Cardiac septum (tissue), 1 donor: ENCODE measurements at regions of chr6 and their contacts with region 1.

Region 1: DNA sequence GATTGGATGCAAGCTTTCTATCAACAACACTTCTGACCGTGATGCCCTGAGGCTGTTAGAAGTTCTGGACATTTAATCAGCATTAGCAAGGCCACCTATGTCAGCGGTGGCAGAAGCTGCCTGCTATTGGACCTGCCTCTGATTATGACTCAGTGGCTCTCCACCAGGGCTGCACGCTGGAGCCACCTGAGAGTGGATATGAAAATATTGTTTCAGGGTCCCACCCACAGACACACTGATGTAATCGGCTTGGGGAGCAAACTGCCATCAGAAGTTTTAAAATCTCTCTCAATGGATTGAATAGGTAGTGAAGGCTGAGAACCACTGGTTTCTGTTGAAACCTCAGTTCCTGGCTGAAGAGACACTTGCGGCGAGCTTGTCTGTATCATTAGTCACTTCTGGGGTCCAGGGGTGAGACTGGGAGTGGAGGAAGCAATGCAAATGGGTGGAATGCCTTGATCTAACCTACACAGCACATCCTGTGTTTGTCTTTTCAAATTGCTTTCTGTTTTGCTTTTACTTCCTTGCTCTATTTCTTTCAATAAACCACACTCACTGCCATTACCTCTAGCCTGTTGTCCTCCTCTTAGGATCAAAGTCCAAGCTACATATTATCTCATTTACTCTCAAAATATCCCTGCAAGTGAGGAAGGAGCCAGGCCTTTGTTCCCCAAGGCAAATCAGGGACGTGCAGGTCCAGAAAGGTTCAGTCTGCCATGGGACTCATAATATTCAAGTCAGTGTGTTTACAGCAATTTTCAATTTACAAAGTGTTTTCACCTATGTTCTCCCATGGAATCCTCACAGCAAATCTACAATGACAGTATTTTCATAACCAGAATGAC is 4.2 kb downstream of the CLIC5 start:
- DNase-seq: no peak

Region 2: DNA sequence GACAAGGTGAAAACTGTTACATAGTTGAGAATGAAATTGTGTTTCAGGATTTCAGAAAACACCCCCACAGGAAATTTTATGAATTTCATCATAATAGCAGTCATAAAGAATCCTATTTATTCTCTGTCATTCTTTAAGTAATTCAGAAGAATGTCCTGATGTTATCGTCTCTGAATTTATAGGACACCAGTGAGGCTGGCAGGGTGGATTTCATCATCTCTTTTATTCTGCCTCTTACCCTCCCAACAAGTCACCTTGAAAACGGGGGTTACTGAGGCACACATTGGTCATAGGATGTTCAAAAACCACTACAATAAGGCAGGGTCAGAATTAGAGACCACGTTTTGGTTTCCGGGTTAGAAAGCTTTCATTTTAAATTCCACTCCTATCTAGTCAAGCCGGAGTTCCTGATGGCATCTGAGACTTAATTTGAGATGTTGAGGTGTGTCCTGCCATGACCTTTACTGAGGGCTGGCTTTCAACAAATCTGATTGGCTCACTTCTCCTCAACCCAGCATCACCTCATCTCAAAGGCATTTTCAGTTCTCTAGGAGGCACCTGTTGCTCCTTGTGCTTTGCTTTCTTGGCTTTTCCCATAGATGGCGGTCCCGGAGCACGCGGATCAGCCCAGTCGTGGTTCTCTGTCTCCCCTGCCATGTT is 403.1 kb before region 1 on chr6:
- intact Hi-C with region 1: no loop called
- DNase-seq: no peak

Region 3: GRCh38 chr6:45930420-45931040 is 80.9 kb before region 1 on chr6:
- intact Hi-C with region 1: loop called (anchors 5 kb)
- DNase-seq: peak; percentile 89

Region 4: GRCh38 chr6:45970326-45970970 is 41.0 kb before region 1 on chr6:
- intact Hi-C with region 1: loop called (anchors 5 kb)
- DNase-seq: no peak

Region 5: DNA sequence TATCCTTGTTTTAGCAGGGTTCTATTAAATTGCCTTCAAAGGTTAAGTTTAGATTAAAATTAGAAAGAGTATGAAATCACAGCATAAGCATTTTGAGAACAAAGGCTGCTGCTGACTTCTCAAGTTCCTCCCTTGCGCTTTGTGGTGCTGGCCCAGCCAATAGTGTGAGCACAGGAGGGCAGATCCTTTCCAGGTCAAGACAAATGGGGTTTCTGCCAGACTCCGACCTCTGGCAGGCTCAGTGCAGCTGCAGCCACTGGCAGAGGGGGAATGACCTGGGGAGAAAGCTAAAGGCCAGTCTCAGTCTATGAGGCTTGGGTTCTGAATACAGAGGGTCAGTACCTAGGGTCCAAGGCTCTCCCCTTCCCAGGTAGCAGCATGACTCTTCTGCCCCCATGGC is 22.8 kb before region 1 on chr6:
- intact Hi-C with region 1: loop called (anchors 2 kb)
- DNase-seq: peak; percentile 82

Region 6: DNA sequence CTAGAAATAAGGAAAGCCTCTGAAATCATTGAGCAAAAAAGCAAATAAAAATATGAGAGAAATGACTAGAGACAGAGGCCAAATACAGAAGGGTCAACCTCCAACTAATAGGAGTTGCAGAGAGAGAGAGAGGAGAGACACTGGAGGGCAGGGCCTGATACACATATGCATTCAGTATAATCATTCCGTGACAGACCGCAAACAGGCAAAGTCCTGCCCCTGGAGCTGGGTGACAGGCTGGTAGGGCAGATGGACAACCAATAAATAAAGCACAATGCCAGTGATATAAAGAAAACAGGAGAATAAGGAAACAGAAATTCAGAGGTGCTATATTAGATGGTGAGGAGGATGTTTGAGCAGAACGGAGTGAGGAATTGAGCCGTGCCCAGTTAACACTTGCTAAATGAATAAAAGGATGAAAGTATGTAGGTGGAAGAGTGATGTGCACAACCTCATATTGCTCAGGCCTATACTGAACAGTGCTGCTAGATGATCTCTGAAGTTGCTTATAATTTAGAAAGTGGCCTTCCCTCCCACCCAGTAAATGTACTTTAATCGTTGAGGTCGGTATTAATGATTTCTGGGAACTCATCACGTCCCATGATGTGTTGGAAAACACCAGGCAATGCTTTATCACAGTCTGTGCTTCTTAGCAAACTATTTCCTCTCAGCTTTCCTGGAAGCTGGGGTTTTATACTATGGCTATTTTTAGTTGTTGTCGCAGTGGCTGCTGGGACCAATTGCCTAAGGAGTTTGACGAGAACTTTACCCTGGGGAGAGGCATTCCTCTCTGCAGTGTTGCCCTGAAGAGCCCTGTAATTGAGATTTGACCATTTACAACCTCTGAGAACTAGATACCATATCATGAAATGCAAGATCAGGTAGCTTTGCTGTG is 41.8 kb after region 1 on chr6:
- intact Hi-C with region 1: loop called (anchors 2 kb)
- DNase-seq: no peak

Region 7: DNA sequence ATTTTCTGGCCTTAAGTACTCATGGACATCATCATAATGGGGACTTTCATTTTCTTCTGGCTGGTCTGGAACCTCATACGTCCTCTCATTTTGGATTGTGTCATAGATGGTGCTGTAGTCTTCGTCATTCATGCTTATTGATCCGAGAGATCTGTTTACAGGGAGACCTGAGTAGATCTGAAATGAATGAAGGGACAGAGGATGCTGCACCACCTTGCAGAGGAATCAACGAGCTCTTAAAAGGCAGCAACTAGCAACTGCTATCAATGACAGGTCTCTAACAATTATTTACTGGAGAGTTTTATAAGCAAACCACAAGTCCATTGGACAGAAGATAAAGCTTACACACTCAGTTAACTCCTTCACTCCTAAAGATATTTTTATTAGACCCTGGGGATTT is 68.6 kb after region 1 on chr6:
- intact Hi-C with region 1: no loop called
- DNase-seq: no peak